HEK293T (cell line): ENCODE measurements at regions of chr7 and their contacts with region 1.

Region 1: DNA sequence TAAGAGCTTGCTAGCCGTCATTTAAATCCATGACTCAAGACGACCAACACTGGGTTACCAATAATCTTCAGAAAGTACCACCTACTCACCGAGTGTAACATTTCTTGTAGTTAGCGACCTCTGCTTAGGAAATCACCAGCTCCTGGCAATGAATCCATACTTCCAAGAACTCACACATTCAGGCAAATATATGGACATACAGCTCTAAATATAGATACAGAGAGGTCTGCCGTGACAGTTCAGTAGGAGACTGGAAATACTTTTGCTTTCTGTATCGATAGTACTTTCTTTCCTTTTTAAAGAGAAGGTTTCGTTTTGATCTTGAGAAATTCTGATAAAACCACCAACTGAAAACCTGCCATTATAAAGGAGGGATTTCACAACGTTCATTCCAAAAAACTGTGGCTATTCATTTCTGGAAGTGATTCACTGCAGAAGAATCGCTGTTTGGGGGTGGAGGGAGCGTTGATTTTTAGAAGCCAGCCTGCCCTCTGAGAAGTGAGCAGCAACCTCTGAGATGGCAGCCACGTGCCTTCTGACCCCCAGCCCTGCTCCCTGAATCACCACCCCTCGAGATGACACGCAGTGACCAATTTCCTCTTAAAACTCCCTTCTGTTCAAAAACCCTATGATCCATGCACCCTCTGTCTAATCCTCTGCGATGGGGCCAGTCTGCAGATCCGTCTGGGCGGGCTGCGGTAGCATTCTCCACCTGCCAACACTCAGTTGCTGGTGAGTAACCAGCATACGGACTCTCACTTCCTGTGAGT is 179.0 kb upstream of the KLF14 start:
- DNase-seq: no peak

Region 2: DNA sequence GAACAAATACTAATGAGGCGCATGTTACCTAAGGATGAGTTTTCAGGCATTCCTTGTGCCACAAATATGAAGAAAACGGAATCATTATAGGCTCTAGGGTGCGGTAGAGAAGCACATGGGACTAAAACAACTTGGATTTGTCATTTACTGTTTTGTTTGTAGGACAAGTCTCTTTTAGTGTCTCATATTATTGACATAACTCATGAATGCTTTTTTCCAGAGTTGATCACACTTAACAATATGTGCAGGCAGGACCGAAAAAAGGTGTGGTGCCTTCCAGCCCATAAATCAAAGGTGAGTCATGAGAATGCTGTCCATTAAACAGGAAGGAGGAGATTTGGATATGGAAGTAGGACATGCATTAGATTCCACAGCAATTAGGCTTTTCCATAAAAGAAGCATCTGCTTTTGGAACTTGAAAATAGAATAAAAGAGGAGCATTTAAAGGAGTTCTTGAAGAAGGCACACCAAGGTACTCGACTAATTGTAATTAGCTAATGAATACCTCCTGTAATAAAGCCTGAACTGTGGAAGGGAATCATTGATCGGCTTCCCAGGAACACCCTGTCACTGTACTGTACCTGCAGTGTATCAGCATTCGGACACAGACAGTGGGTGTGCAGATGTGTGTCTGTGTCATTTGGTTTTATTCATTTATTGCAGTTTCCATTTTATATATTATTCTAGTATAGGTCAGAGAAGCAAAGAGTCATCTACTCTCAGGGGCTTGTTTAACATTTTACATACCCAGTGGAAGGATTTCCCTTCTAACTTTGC is 59.4 kb before region 1 on chr7:
- CTCF ChIA-PET with region 1: no interaction called
- POLR2A ChIA-PET with region 1: no interaction called
- DNase-seq: no peak

Region 3: GRCh38 chr7:130941322-130942210 is 28.5 kb after region 1 on chr7:
- CTCF ChIA-PET with region 1: no interaction called
- POLR2A ChIA-PET with region 1: interaction called, 11 read pairs
- DNase-seq: peak; percentile 49

Region 4: GRCh38 chr7:130960208-130960988 is 47.4 kb after region 1 on chr7:
- CTCF ChIA-PET with region 1: no interaction called
- POLR2A ChIA-PET with region 1: no interaction called
- DNase-seq: no peak